Activated CD8-positive, alpha-beta T cell treated with anti-CD3 and anti-CD28 coated beads for 36 hours (primary cell): ENCODE measurements at regions of chr3 and their contacts with region 1.

Region 1: DNA sequence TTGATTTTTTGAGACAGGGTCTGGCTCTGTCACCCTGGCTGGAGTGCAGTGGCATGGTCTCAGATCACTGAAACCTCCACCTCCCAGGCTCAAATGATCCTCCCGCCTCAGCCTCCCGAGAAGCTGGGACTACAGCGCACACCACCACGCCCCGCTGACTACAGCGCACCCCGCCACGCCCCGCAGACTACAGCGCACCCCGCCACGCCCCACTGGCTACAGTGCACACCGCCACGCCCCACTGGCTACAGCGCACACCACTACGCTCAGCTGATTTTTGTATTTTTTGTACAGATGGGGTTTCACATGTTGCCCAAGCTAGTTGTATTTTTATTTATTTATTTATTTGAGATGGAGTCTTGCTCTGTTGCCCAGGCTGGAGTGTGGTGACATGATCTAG is 35.6 kb downstream of the SLC51A start:
- DNase-seq: no peak
- ATAC-seq: no peak
- H3K4me3 Mint-ChIP-seq: no peak overlapping the region
- H3K27ac Mint-ChIP-seq: no peak overlapping the region
- H3K4me1 Mint-ChIP-seq: peaks cover 2% of the 10 kb centered on the region
- H3K27me3 Mint-ChIP-seq: no peaks in the 10 kb centered on the region
- CTCF ChIP-seq: no peak

Region 2: DNA sequence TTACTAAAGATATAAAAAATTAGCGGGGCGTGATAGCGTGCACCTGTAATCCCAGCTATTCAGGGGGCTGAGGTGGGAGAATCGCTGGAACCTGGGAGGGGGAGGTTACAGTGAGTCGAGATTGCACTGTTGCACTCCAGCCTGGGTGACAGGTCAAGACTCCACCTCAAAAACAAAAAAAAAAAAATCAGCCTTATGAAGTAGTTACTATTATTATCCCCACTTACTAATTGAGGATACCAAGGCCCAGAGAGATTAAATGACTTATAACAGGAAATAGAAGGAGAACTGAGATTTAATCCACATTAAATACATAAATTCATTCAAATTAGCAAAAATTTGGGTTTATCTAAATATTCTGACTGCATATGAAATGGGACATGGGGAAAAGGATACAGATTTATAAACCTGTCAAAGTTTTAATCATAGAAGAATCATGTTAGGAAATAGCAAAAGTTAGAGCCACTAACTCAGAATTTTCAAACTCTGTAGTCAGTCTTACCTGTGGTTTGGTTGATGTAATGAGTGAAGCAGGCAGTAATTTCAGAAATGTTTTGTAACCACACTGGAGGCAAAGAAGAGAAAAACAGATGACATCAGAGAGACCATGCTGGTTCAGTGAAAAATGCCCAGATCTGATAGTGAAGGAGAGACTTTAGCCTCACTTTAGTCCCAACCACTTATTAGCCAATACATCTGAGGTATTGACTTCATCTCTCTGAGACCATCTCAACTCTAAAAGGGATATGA is 784.1 kb before region 1 on chr3:
- CTCF ChIA-PET with region 1: no interaction called
- POLR2A ChIA-PET with region 1: no interaction called
- intact Hi-C with region 1: no loop called
- DNase-seq: no peak
- ATAC-seq: peak; percentile 87
- H3K4me3 Mint-ChIP-seq: no peak overlapping the region
- H3K27ac Mint-ChIP-seq: peak overlapping the region; percentile 62
- H3K4me1 Mint-ChIP-seq: peaks cover 12% of the 10 kb centered on the region
- H3K27me3 Mint-ChIP-seq: no peaks in the 10 kb centered on the region
- CTCF ChIP-seq: no peak

Region 3: DNA sequence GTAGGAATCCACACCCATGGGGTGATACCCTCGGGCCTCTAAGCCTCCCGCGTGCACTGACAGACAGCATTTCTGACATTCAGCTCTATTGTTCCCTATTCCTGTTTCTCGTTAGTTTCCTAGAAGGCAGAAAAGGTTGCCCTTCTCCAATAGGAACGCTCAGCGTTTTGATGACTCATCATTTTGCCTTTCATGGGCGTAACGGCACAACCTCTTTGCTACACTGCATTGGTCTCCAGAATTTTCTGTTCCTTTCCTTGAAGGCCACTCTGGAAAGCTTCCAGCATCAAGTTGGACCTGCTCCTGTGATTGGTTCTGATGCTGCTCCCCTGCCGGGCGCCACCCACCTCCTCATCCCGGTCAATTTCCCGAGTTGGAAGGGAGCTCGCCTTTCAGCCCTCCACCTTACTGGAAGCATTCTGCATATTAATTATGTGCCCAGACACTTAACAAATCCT is 330.6 kb before region 1 on chr3:
- CTCF ChIA-PET with region 1: no interaction called
- POLR2A ChIA-PET with region 1: no interaction called
- intact Hi-C with region 1: no loop called
- DNase-seq: no peak
- ATAC-seq: no peak
- H3K4me3 Mint-ChIP-seq: no peak overlapping the region
- H3K27ac Mint-ChIP-seq: no peak overlapping the region
- H3K4me1 Mint-ChIP-seq: no peaks in the 10 kb centered on the region
- H3K27me3 Mint-ChIP-seq: no peaks in the 10 kb centered on the region
- CTCF ChIP-seq: no peak

Region 4: GRCh38 chr3:196111939-196112386 is 140.0 kb before region 1 on chr3:
- CTCF ChIA-PET with region 1: no interaction called
- POLR2A ChIA-PET with region 1: no interaction called
- intact Hi-C with region 1: no loop called
- DNase-seq: peak; percentile 56
- ATAC-seq: peak; percentile 89
- H3K4me3 Mint-ChIP-seq: peak overlapping the region; percentile 21
- H3K27ac Mint-ChIP-seq: peak overlapping the region; percentile 71
- H3K4me1 Mint-ChIP-seq: peaks cover 15% of the 10 kb centered on the region
- H3K27me3 Mint-ChIP-seq: no peaks in the 10 kb centered on the region
- CTCF ChIP-seq: no peak

Region 5: GRCh38 chr3:196263819-196264218 is 11.9 kb after region 1 on chr3:
- CTCF ChIA-PET with region 1: no interaction called
- POLR2A ChIA-PET with region 1: no interaction called
- intact Hi-C with region 1: no loop called
- DNase-seq: no peak
- ATAC-seq: no peak
- H3K4me3 Mint-ChIP-seq: no peak overlapping the region
- H3K27ac Mint-ChIP-seq: no peak overlapping the region
- H3K4me1 Mint-ChIP-seq: no peaks in the 10 kb centered on the region
- H3K27me3 Mint-ChIP-seq: no peaks in the 10 kb centered on the region
- CTCF ChIP-seq: no peak

Region 6: GRCh38 chr3:196317687-196318467 is 66.0 kb after region 1 on chr3 and contains the start of gene DYNLT2B:
- CTCF ChIA-PET with region 1: interaction called, 4 read pairs
- POLR2A ChIA-PET with region 1: interaction called, 8 read pairs
- intact Hi-C with region 1: loop called (anchors 10 kb)
- DNase-seq: peak; percentile 88
- ATAC-seq: peak; percentile 92
- H3K4me3 Mint-ChIP-seq: peak within 1 kb of the TSS; percentile 92
- H3K27ac Mint-ChIP-seq: peak within 1 kb of the TSS; percentile 95
- H3K4me1 Mint-ChIP-seq: peaks cover 12% of the 10 kb centered on the region
- H3K27me3 Mint-ChIP-seq: no peaks in the 10 kb centered on the region
- CTCF ChIP-seq: no peak
- total RNA-seq, gene DYNLT2B: 8.8 to 9.5 TPM